Cardiac septum (tissue), 1 donor: ENCODE measurements at regions of chr18 and their contacts with region 1.

Region 1: GRCh38 chr18:5841518-5841917 is 53.8 kb downstream of the TMEM200C start:
- DNase-seq: no peak

Region 2: DNA sequence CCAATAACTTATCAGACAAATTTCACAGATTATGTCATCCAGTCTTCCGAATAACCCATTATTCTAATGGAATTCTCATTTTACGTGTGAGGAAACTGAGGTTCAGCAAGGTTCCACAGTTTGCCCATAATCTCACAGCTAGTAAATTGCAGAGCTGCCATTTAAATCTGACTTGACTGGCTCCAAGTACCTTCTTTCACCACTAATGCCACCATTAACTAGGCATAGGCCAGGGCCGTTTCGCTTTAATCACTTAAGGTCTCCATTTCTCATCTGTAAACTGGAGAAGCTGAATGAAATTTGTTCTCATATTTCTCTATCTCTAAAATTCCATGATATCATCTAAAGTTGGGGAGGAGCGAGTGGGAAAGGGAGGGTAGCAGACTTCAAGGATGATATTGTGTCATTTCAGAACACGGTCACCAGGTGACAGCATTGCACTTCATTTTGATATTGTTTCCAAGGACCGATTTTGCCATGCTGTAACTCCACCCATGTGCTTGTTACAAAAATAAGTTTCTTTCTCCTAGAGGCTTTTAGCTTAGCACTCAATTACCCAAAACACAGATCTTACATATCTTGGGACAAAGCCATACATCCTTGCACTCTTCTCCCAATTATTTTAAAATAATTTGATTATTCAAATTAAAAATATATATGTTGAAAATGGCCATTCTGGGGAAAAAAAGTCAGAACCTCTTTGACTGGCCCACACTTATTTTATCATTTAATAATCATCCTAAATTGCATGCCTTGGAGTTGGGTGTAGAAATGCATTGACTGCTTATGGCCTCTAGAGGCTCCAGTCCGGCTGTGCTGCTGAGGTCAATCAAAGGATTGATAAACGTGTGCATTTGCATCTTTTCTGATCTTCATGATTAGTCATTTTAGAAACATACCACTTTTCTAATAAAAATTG is 768.2 kb before region 1 on chr18:
- intact Hi-C with region 1: loop called (anchors 5 kb)
- DNase-seq: no peak

Region 3: DNA sequence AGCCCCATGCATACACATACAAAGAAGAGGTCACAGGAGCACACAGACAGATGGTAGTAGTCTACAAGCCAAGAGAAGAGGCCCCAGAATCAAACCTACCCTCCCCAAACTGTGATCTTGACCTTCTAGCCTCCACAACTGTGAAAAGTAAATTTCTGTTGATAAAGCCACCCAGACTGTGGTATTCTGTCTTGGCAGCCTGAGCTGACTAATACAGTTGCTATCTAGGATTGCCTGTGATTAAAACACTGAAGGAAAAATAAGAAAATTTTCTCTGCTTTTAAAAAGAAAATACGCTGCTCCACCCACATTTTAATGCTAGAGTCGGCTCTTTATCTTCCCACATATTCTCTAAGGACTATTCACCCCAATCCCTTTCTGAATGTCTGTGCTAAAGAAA is 197.5 kb after region 1 on chr18:
- intact Hi-C with region 1: no loop called
- DNase-seq: no peak